ENCODE measurements at regions of chr1 and their contacts with region 1.

Region 1: DNA sequence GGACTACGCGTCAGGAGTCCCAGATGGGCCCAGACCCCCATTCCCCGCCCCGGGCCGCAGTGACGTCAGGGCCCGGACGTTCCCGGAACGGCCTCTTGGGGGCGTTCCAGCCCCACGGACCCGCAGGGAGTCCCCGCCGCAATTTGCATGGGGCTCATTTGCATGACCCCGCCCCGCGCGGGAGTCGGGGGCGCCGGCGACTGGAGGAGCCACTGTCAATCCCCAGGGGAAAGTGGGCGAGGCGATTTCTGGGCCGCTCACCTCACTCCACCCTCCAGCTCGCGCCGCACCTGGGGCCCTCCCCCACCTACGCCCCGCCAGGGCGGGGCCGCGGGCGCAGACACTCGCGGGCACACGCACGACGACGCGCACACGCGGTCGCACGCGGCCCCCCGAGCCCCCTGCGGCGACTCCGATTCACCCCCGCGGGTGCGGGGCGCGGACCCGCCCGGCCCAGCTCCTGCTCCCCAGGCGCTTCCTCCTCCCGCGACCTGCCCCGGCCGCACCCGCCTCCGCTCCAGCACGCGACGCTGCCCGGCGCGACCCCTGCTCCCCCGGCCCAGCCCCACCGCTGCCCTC is 13.2 kb downstream of the AGRN start:
- DNase-seq: peak; percentile 95
- H3K4me3 Mint-ChIP-seq: no peak overlapping the region
- H3K27ac Mint-ChIP-seq: no peak overlapping the region
- H3K4me1 Mint-ChIP-seq: peaks cover 7% of the 10 kb centered on the region
- H3K27me3 Mint-ChIP-seq: peaks cover 26% of the 10 kb centered on the region

Region 2: DNA sequence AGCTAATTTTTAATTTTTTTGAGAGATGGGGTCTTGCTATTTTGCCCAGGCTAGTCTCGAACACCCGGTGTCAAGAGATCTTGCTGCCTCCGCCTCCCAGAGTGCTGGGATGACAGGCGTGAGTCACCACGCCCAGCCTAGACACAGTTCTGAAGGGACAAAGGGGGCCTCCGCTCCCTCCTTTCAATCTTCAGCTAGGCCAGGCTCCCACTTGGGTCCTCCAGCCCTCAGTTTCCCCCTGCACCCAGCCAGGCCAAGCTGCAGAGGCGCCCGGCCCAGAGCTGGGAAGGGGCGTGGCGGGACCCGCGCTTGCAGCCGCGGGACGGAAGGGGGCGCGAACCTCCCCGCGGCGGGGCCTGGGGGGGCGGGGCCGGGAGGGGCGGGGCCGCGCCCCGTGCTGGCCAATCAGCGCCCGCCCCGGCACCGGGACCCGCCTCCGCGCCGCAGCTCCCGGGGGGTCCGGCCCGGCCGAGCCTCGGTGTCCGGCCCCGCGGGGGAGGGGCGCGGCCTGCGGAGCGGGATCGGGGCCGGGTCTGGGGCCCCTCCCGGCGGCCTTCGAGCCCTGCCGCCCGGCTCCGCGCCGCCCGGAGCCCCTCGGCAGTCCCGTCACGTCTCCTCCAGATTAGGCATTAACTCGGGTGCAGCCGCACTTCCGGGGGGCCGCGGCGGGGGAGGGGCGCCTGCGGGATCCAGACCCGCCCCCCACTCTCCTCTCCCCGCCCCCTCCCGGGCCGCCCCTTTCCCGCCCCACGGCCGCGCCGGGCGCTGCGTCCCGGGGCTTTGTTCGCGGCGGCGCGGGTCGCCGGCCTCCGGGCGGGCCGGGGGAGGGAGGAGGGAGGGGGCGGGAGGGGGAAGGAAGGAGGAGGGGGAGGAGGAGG is 13.7 kb before region 1 on chr1:
- CTCF ChIA-PET with region 1: interaction called, 10 read pairs
- POLR2A ChIA-PET with region 1: interaction called, 3 read pairs
- intact Hi-C with region 1: no loop called
- DNase-seq: peak; percentile 83
- H3K4me3 Mint-ChIP-seq: peak overlapping the region; percentile 62
- H3K27ac Mint-ChIP-seq: no peak overlapping the region
- H3K4me1 Mint-ChIP-seq: peaks cover 8% of the 10 kb centered on the region
- H3K27me3 Mint-ChIP-seq: peaks cover 9% of the 10 kb centered on the region

Region 3: GRCh38 chr1:1200851-1201810 is 168.0 kb after region 1 on chr1:
- CTCF ChIA-PET with region 1: no interaction called
- POLR2A ChIA-PET with region 1: no interaction called
- intact Hi-C with region 1: loop called (anchors 10 kb)
- DNase-seq: peak; percentile 93
- H3K4me3 Mint-ChIP-seq: peak overlapping the region; percentile 56
- H3K27ac Mint-ChIP-seq: peak overlapping the region; percentile 78
- H3K4me1 Mint-ChIP-seq: peaks cover 13% of the 10 kb centered on the region
- H3K27me3 Mint-ChIP-seq: no peaks in the 10 kb centered on the region